Activated CD8-positive, alpha-beta T cell treated with anti-CD3 and anti-CD28 coated beads for 36 hours (primary cell): ENCODE measurements at regions of chr18 and their contacts with region 1.

Region 1: GRCh38 chr18:11553098-11553940 is 56.1 kb upstream of the SLC35G4 start:
- DNase-seq: peak; percentile 53
- ATAC-seq: peak; percentile 74
- H3K4me3 Mint-ChIP-seq: no peak overlapping the region
- H3K27ac Mint-ChIP-seq: no peak overlapping the region
- H3K4me1 Mint-ChIP-seq: no peaks in the 10 kb centered on the region
- H3K27me3 Mint-ChIP-seq: peaks cover 2% of the 10 kb centered on the region
- CTCF ChIP-seq: peak; percentile 92

Region 2: DNA sequence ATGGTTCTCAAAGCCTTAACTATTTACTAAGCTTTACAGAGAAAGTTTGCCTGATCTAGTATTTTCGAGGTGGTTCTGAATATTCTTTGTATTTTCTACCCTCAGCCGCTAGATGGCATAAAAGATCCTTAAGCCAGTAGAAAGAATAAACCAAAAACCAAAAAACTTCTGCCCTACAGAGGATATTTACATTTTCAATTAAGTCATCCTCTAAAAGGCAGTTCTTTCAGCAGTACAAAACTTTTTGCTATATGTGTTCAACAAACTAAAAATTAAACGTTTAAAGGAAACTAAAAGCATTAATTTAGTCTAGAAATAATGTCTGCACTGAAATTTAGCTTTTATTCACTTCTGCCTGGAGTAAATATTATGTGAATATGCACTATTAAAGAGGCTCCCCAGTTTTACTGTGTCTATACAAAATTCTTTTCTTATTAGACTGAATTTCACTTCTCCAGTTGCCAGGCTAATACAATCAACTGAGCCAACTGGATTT is 701.4 kb before region 1 on chr18:
- CTCF ChIA-PET with region 1: interaction called, 11 read pairs
- POLR2A ChIA-PET with region 1: no interaction called
- intact Hi-C with region 1: loop called (anchors 10 kb)
- DNase-seq: no peak
- ATAC-seq: no peak
- H3K4me3 Mint-ChIP-seq: no peak overlapping the region
- H3K27ac Mint-ChIP-seq: no peak overlapping the region
- H3K4me1 Mint-ChIP-seq: no peaks in the 10 kb centered on the region
- H3K27me3 Mint-ChIP-seq: peaks cover 3% of the 10 kb centered on the region
- CTCF ChIP-seq: peak; percentile 81

Region 3: DNA sequence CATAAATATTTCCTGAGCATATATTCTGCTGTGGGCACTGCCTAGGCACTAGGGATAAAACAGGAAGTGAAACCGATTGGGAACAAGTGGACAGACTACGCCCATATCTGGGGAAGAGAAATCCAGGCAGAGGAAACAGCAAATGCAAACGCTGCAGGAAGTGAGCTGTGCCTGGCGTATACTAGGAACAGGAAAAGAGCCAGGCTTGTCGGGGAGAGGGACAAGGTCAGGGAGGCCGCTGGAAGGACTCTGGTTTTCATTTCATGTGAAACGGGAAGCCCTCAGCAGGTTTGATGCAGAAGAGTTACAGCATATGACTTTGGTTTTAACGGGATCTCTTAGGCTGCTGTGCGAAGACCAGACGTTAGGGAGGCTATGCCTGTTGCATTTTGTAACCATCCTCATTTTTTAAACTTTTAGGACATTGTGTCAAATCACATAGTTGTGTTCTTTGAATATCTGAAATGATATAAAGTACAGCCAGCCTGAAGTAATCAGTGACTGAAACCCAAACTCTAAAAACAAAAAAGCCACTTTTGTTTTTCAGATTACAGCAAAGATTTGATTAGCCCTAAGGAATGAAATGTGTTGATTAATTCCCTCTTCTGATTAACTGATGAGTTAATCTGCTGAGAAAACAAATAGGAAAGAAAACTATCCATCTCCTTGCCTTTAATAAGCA is 293.7 kb before region 1 on chr18:
- CTCF ChIA-PET with region 1: no interaction called
- POLR2A ChIA-PET with region 1: no interaction called
- intact Hi-C with region 1: no loop called
- DNase-seq: no peak
- ATAC-seq: no peak
- H3K4me3 Mint-ChIP-seq: no peak overlapping the region
- H3K27ac Mint-ChIP-seq: no peak overlapping the region
- H3K4me1 Mint-ChIP-seq: no peaks in the 10 kb centered on the region
- H3K27me3 Mint-ChIP-seq: no peaks in the 10 kb centered on the region
- CTCF ChIP-seq: no peak

Region 4: DNA sequence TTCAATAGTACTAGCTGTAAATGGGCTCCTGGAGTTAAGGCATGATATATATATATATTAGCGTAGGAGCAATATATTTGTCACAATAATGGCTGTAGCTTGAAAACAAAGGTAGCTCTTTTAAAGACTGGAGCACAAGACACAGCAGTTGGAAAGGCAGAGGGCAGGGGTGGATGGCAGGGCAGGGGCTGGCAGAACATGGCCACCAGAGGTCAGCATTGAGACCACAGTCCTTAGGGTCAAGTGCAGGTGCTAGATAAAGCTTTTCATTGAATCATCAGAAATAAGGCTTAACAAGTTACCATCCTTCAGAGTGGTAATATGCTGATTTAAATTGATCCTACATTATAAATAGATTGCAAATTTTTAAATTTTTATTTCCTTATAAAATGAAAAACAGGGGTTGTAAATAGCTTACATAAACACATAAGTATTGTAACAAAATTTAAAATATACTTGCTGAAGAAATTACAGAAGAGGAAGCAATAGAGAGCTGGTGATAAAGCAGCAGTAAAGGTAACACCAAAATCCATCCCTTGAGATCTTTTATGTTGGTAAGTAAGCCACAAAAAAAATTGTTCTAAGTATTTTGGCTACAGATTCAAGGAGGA is 242.7 kb before region 1 on chr18:
- CTCF ChIA-PET with region 1: interaction called, 18 read pairs
- POLR2A ChIA-PET with region 1: no interaction called
- intact Hi-C with region 1: no loop called
- DNase-seq: peak; percentile 51
- ATAC-seq: no peak
- H3K4me3 Mint-ChIP-seq: no peak overlapping the region
- H3K27ac Mint-ChIP-seq: no peak overlapping the region
- H3K4me1 Mint-ChIP-seq: no peaks in the 10 kb centered on the region
- H3K27me3 Mint-ChIP-seq: no peaks in the 10 kb centered on the region
- CTCF ChIP-seq: peak; percentile 56

Region 5: DNA sequence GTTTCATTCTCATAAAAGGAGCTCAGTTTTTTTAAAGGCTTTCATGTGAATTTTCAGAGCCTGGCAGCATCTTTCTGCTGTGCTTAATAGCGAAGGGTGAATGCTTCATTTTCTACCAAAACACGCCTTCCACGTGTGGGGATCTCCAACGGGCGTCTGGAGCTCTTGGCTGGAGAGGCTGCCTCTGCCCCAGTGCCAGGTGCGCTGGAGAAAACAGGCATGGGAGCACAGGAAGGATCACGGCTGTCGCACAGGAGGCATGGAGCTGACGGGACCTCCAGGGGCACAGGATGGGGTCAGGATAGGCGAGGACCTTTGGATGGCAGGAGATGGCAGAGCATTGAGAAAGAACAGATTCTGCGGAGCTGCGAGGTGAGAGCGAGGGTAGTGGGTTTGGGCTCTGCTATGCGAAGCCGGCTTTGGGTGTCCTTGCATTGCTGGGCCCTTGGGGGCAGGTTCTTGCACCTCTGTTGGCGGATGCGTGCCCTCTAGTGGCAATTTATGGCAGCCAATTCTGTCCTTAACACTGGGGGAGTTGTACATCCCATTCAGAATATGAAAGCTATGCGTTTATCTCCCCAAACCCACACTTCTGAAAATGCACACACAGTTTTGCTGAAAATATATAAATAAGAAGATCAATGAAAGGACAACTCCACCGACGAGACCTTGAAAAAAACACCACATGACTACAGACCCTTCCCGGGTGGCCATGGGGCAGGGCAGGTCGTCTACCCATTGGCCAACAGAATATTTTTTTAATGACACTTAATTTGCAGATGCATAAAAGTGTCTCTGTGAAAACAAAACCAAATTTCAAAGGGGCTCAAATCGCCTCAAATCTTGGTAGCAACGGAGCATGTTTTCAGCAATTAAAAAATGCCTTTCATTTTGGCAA is 34.3 kb before region 1 on chr18:
- CTCF ChIA-PET with region 1: interaction called, 10 read pairs
- POLR2A ChIA-PET with region 1: no interaction called
- intact Hi-C with region 1: no loop called
- DNase-seq: peak; percentile 69
- ATAC-seq: peak; percentile 61
- H3K4me3 Mint-ChIP-seq: no peak overlapping the region
- H3K27ac Mint-ChIP-seq: no peak overlapping the region
- H3K4me1 Mint-ChIP-seq: no peaks in the 10 kb centered on the region
- H3K27me3 Mint-ChIP-seq: no peaks in the 10 kb centered on the region
- CTCF ChIP-seq: peak; percentile 70

Region 6: DNA sequence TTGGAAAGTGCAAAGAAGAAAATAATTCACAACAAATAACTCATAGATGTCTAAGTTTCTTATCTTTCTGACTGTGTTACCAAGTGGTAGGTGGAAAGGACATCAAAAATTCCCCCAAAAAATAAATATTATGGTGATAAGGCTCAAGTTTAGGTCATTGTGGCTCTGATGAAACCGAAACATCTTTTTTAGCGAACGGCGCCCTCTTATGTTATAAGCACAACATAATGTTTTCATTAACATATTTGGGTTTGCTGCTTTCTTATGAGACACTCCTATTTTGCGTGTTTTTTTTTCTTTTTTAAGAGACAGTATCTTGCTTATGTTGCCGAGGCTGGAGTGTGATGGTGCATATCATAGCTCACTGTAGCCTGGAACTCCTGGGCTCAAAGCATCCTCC is 17.4 kb after region 1 on chr18:
- CTCF ChIA-PET with region 1: interaction called, 15 read pairs
- POLR2A ChIA-PET with region 1: no interaction called
- intact Hi-C with region 1: no loop called
- DNase-seq: peak; percentile 24
- ATAC-seq: no peak
- H3K4me3 Mint-ChIP-seq: no peak overlapping the region
- H3K27ac Mint-ChIP-seq: no peak overlapping the region
- H3K4me1 Mint-ChIP-seq: no peaks in the 10 kb centered on the region
- H3K27me3 Mint-ChIP-seq: no peaks in the 10 kb centered on the region
- CTCF ChIP-seq: no peak